CD4-positive, alpha-beta memory T cell (primary cell): ENCODE measurements at regions of chr12 and their contacts with region 1.

Region 1: GRCh38 chr12:6470375-6471163 is at the start of gene VAMP1:
- DNase-seq: peak; percentile 95 to 99 (median 96)
- H3K4me3 ChIP-seq: peak within 1 kb of the TSS; percentile 74 to 76
- H3K4me3 Mint-ChIP-seq: peak within 1 kb of the TSS; percentile 86 to 97 (median 92)
- H3K27ac ChIP-seq: peak within 1 kb of the TSS; percentile 64
- H3K27ac Mint-ChIP-seq: peak within 1 kb of the TSS; percentile 90 to 97 (median 94)
- H3K4me1 ChIP-seq: peaks cover 46% of the 10 kb centered on the region
- H3K4me1 Mint-ChIP-seq: peaks cover 35 to 52% (median 48%) of the 10 kb centered on the region in 4 donors
- H3K27me3 ChIP-seq: no peaks in the 10 kb centered on the region
- H3K27me3 Mint-ChIP-seq: no peaks in the 10 kb centered on the region
- total RNA-seq, gene VAMP1: 97.7 to 101 TPM

Region 2: DNA sequence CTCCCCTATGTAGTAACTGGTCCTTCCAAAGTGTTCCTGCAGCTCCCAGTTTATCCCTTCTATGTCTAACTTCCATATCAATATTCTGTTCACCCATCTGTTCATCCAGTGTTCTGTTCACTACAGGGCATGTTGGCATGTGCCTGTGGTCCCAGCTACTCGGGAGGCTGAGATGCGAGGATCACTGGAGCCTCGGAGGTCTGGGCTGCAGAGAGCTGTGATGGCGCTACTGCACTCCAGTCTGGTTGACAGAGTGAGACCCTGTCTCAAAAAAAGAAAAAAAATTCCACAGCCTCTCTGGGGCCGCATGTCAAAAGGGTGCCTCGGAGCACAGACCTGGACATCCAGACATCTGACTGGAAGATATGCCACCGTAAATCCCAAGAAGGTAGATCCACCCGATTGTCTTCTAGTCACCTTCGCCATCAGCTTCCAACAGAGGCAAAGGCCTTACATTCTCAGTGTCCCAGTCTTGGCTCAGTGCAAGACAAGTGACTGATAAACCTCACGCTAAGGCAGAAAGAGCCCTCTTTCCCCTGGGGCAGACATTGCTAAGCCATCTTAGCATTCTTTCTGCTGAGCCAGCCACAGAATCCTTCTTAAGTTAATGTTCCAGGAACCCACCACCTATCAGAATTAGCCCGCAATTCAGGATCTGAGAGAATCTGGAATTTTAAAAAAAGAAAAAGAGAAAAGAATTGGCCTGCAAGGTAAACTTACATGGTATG is 164.6 kb before region 1 on chr12:
- CTCF ChIA-PET with region 1: no interaction called
- POLR2A ChIA-PET with region 1: no interaction called
- intact Hi-C with region 1: no loop called
- DNase-seq: no peak
- H3K4me3 ChIP-seq: no peak overlapping the region
- H3K4me3 Mint-ChIP-seq: peak overlapping the region in 2 of 8 donors; percentile 0 to 4
- H3K27ac ChIP-seq: no peak overlapping the region
- H3K27ac Mint-ChIP-seq: no peak overlapping the region
- H3K4me1 ChIP-seq: peaks cover 4% of the 10 kb centered on the region
- H3K4me1 Mint-ChIP-seq: peaks cover 0 to 1% (median 0%) of the 10 kb centered on the region in 4 donors
- H3K27me3 ChIP-seq: peaks cover 2% of the 10 kb centered on the region
- H3K27me3 Mint-ChIP-seq: peaks cover 12 to 17% of the 10 kb centered on the region in 2 donors

Region 3: GRCh38 chr12:6341417-6342139 is 129.0 kb before region 1 on chr12 and contains the start of gene TNFRSF1A:
- CTCF ChIA-PET with region 1: interaction called, 56 read pairs
- POLR2A ChIA-PET with region 1: interaction called, 80 read pairs
- intact Hi-C with region 1: loop called (anchors 2 kb)
- DNase-seq: peak; percentile 44 to 66 (median 56)
- H3K4me3 ChIP-seq: peak within 1 kb of the TSS; percentile 87 to 97
- H3K4me3 Mint-ChIP-seq: no peak within 1 kb of the TSS
- H3K27ac ChIP-seq: peak within 1 kb of the TSS; percentile 92
- H3K27ac Mint-ChIP-seq: peak within 1 kb of the TSS in 2 of 7 donors; percentile 87 to 97
- H3K4me1 ChIP-seq: peaks cover 74% of the 10 kb centered on the region
- H3K4me1 Mint-ChIP-seq: peaks cover 28 to 40% (median 35%) of the 10 kb centered on the region in 4 donors
- H3K27me3 ChIP-seq: no peaks in the 10 kb centered on the region
- H3K27me3 Mint-ChIP-seq: no peaks in the 10 kb centered on the region
- total RNA-seq, gene TNFRSF1A: 80.7 to 86.7 TPM

Region 4: DNA sequence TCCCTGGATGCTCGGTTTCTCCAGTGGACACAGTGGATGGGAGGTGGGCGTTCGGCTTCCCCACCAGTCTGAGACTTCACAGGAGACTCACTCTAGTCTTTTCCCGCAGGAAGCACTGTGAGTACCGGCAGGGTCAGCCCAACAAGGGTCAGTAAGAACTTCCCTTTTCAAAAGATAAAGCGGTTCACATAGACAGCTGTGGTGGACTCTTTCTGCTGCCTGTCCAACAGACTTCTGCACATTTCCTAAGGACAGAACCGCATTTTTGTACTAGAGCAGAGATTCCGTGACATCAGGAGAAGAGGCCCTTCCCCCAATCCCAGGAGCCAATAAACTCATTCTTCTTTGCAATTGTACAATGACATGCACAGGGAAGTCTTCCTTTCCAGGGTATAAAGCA is 76.2 kb before region 1 on chr12:
- CTCF ChIA-PET with region 1: no interaction called
- POLR2A ChIA-PET with region 1: no interaction called
- intact Hi-C with region 1: no loop called
- DNase-seq: no peak
- H3K4me3 ChIP-seq: no peak overlapping the region
- H3K4me3 Mint-ChIP-seq: no peak overlapping the region
- H3K27ac ChIP-seq: no peak overlapping the region
- H3K27ac Mint-ChIP-seq: no peak overlapping the region
- H3K4me1 ChIP-seq: no peaks in the 10 kb centered on the region
- H3K4me1 Mint-ChIP-seq: no peaks in the 10 kb centered on the region
- H3K27me3 ChIP-seq: no peaks in the 10 kb centered on the region
- H3K27me3 Mint-ChIP-seq: no peaks in the 10 kb centered on the region

Region 5: DNA sequence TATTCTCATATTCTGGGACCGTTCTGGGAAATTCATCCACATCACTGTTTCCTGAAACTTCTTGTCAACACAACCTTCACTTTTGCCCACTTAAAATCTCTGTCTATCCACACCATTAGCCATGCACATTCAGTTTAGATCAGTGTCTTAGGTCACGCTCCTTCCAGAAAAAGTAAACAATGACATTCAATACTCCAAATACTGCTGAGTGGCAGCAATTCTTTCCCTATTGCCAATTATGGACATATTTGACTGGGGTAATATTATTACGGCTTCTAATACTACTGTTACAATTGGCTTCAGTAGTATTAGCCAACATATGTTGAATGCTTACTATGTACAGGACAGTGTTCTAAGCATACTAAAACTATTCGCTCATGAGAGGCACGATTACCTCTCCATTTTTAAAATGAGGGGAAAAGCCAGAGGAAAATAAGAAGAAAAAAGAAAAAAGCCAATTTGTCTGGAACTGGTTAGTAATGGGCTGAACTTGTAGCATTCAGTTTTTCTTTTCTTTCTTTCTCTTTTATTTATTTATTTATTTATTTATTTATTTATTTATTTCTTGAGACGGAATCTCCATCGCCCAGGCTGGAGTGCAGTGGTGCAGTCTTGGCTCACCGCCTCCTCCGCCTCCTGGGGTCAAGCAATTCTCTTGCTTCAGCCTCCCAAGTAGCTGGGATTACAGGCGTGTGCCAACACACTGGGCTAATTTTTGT is 63.2 kb before region 1 on chr12:
- CTCF ChIA-PET with region 1: no interaction called
- POLR2A ChIA-PET with region 1: no interaction called
- intact Hi-C with region 1: no loop called
- DNase-seq: no peak
- H3K4me3 ChIP-seq: no peak overlapping the region
- H3K4me3 Mint-ChIP-seq: no peak overlapping the region
- H3K27ac ChIP-seq: no peak overlapping the region
- H3K27ac Mint-ChIP-seq: no peak overlapping the region
- H3K4me1 ChIP-seq: no peaks in the 10 kb centered on the region
- H3K4me1 Mint-ChIP-seq: no peaks in the 10 kb centered on the region
- H3K27me3 ChIP-seq: no peaks in the 10 kb centered on the region
- H3K27me3 Mint-ChIP-seq: peaks cover 0 to 2% of the 10 kb centered on the region in 2 donors

Region 6: GRCh38 chr12:6423267-6424007 is 47.1 kb before region 1 on chr12:
- CTCF ChIA-PET with region 1: interaction called, 341 read pairs
- POLR2A ChIA-PET with region 1: interaction called, 284 read pairs
- intact Hi-C with region 1: loop called (anchors 1 kb)
- DNase-seq: peak; percentile 83 to 86 (median 85)
- H3K4me3 ChIP-seq: no peak overlapping the region
- H3K4me3 Mint-ChIP-seq: peak overlapping the region in 6 of 8 donors; percentile 12 to 56 (median 31)
- H3K27ac ChIP-seq: peak overlapping the region; percentile 8
- H3K27ac Mint-ChIP-seq: peak overlapping the region; percentile 68 to 90 (median 82)
- H3K4me1 ChIP-seq: peaks cover 42% of the 10 kb centered on the region
- H3K4me1 Mint-ChIP-seq: peaks cover 28 to 38% (median 33%) of the 10 kb centered on the region in 4 donors
- H3K27me3 ChIP-seq: no peaks in the 10 kb centered on the region
- H3K27me3 Mint-ChIP-seq: peaks cover 0 to 6% of the 10 kb centered on the region in 2 donors

Region 7: GRCh38 chr12:6443361-6443983 is 27.1 kb before region 1 on chr12:
- CTCF ChIA-PET with region 1: interaction called, 247 read pairs
- POLR2A ChIA-PET with region 1: interaction called, 728 read pairs
- intact Hi-C with region 1: loop called (anchors 1 kb)
- DNase-seq: no peak
- H3K4me3 ChIP-seq: no peak overlapping the region
- H3K4me3 Mint-ChIP-seq: peak overlapping the region; percentile 83 to 99 (median 96)
- H3K27ac ChIP-seq: peak overlapping the region; percentile 41
- H3K27ac Mint-ChIP-seq: peak overlapping the region; percentile 80 to 99 (median 92)
- H3K4me1 ChIP-seq: peaks cover 37% of the 10 kb centered on the region
- H3K4me1 Mint-ChIP-seq: peaks cover 28 to 64% (median 40%) of the 10 kb centered on the region in 4 donors
- H3K27me3 ChIP-seq: no peaks in the 10 kb centered on the region
- H3K27me3 Mint-ChIP-seq: no peaks in the 10 kb centered on the region

Region 8: DNA sequence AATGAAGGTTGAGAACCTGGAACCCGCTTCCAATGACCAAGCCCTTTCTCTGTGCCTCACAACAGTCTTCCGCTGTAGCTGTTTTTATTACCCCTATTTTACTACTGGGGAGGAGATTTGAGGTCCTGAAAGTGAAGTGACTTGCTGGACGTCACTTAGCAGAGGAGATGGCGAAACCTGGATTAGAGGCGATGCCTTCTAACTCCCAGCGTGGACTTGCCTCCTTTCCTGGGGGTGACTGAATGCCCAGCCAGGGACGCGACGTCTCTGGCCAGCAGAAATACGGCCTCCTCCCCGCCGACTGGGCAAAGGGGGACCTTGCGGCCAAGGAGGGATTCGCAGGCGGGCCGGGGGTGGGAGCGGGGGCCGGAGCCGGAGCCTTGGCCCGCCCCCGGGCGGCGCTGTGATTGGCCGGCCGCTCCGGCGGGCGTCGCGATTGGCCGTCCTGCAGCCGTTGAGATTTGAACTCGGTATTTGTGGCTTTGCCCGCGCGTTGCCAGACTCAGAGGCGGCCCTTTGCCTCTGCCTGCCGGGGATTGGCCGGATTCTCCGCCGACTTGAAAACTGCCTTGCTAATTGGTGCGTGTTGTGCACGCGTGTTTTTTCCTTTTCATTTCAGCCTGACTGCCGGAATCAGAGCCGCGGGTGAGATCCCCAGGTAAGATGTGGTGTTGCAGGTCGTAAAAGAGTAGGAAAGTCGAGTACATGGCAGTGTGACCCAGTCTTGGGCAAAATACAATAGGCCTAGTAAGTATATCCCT is 23.1 kb after region 1 on chr12 and contains the start of gene NCAPD2:
- CTCF ChIA-PET with region 1: interaction called, 10 read pairs
- POLR2A ChIA-PET with region 1: interaction called, 99 read pairs
- intact Hi-C with region 1: loop called (anchors 1 kb)
- DNase-seq: peak; percentile 96 to 97 (median 96)
- H3K4me3 ChIP-seq: peak within 1 kb of the TSS; percentile 98 to 99
- H3K4me3 Mint-ChIP-seq: peak within 1 kb of the TSS; percentile 89 to 98 (median 96)
- H3K27ac ChIP-seq: peak within 1 kb of the TSS; percentile 87
- H3K27ac Mint-ChIP-seq: peak within 1 kb of the TSS; percentile 90 to 99 (median 97)
- H3K4me1 ChIP-seq: peaks cover 37% of the 10 kb centered on the region
- H3K4me1 Mint-ChIP-seq: peaks cover 26 to 46% (median 35%) of the 10 kb centered on the region in 4 donors
- H3K27me3 ChIP-seq: no peaks in the 10 kb centered on the region
- H3K27me3 Mint-ChIP-seq: no peaks in the 10 kb centered on the region
- total RNA-seq, gene NCAPD2: 38.1 to 39.8 TPM

Region 9: GRCh38 chr12:6533923-6534694 is 63.5 kb after region 1 on chr12 and contains the start of gene GAPDH:
- CTCF ChIA-PET with region 1: interaction called, 134 read pairs
- POLR2A ChIA-PET with region 1: interaction called, 237 read pairs
- intact Hi-C with region 1: loop called (anchors 1 kb)
- DNase-seq: peak; percentile 85 to 89 (median 88)
- H3K4me3 ChIP-seq: peak within 1 kb of the TSS; percentile 79 to 81
- H3K4me3 Mint-ChIP-seq: peak within 1 kb of the TSS; percentile 90 to 98 (median 94)
- H3K27ac ChIP-seq: peak within 1 kb of the TSS; percentile 86
- H3K27ac Mint-ChIP-seq: peak within 1 kb of the TSS; percentile 88 to 99 (median 99)
- H3K4me1 ChIP-seq: peaks cover 62% of the 10 kb centered on the region
- H3K4me1 Mint-ChIP-seq: peaks cover 30 to 67% (median 45%) of the 10 kb centered on the region in 4 donors
- H3K27me3 ChIP-seq: no peaks in the 10 kb centered on the region
- H3K27me3 Mint-ChIP-seq: no peaks in the 10 kb centered on the region
- total RNA-seq, gene GAPDH: 474 to 495 TPM

Region 10: GRCh38 chr12:6554168-6555017 is 83.8 kb after region 1 on chr12:
- CTCF ChIA-PET with region 1: interaction called, 9 read pairs
- POLR2A ChIA-PET with region 1: interaction called, 10 read pairs
- intact Hi-C with region 1: no loop called
- DNase-seq: peak; percentile 60 to 79 (median 63)
- H3K4me3 ChIP-seq: peak overlapping the region; percentile 71 to 73
- H3K4me3 Mint-ChIP-seq: peak overlapping the region; percentile 81 to 96 (median 88)
- H3K27ac ChIP-seq: peak overlapping the region; percentile 48
- H3K27ac Mint-ChIP-seq: peak overlapping the region; percentile 14 to 89 (median 70)
- H3K4me1 ChIP-seq: peaks cover 57% of the 10 kb centered on the region
- H3K4me1 Mint-ChIP-seq: peaks cover 28 to 64% (median 45%) of the 10 kb centered on the region in 4 donors
- H3K27me3 ChIP-seq: no peaks in the 10 kb centered on the region
- H3K27me3 Mint-ChIP-seq: no peaks in the 10 kb centered on the region